ENCODE measurements at regions of chr17 and their contacts with region 1.

Region 1: GRCh38 chr17:7897773-7898172 is 9.2 kb downstream of the CHD3 start:
- DNase-seq: no peak
- H3K4me3 Mint-ChIP-seq: no peak overlapping the region
- H3K27ac Mint-ChIP-seq: no peak overlapping the region
- H3K4me1 Mint-ChIP-seq: no peaks in the 10 kb centered on the region
- H3K27me3 Mint-ChIP-seq: no peaks in the 10 kb centered on the region
- CTCF ChIP-seq: no peak

Region 2: DNA sequence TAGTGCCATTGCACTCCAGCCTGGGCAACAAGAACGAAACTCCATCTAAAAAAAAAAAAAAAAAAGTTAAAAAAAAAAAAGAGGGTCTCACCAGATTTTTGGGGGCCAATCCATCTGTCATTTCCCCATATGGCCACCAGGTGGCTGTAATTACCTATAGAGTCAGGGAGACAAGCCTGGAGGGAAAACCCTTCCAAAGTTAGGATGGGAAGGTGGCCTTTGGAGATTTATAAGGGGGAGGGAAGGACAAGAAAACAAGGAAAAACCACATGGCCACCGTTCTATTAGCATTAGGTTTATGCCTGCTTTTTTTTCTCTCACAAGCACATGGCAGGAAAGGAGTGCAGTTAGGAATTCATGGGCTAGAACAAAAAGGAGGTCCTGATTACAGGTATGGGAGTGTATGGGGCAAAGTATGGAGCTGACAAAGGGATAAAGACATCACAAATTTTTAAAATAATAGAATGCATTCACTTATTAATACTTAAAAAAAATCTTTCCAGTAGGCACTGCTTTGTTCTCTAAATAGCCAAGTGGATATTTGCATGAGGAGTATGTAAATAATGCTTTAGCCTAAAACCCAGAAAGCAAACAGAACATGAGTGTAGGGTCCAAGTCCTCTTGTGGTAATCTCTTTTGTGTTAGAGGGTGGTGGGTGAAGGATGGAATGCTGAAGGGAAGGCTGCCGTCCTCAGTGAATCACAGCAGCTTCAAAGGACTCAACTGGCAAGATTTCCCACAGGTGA is 34.9 kb before region 1 on chr17:
- CTCF ChIA-PET with region 1: no interaction called
- intact Hi-C with region 1: loop called (anchors 5 kb)
- DNase-seq: peak; percentile 32
- H3K4me3 Mint-ChIP-seq: no peak overlapping the region
- H3K27ac Mint-ChIP-seq: no peak overlapping the region
- H3K4me1 Mint-ChIP-seq: peaks cover 9% of the 10 kb centered on the region
- H3K27me3 Mint-ChIP-seq: no peaks in the 10 kb centered on the region
- CTCF ChIP-seq: peak; percentile 68

Measured in Calu3 (cell line).